Caco-2 (cell line): ENCODE measurements at regions of chr2 and their contacts with region 1.

Region 1: DNA sequence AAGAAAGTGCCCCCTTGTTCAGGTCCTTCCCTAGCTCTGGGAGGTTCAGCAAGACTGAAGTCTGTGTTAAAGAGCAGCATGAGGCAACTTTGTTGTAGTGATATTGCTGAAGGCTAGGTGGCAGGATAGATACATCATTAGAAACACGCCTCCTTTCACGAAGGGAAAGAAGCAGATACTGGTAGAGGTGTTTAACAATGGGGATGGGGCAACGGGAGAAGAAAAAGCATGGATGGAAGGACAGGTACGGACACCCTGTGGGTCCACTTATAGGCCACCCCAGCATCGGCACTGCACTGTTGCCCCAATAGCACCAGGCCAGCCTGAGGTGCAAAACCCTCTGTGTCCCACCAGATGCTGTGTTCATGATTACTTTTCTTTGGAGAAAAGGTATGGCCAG is 3.5 kb upstream of the IGFBP5 start:
- DNase-seq: peak in 1 of 2 experiments; percentile 55
- H3K4me3 ChIP-seq: no peak overlapping the region
- H3K4me3 Mint-ChIP-seq: no peak overlapping the region
- H3K27ac Mint-ChIP-seq: no peak overlapping the region
- H3K4me1 ChIP-seq: peaks cover 6% of the 10 kb centered on the region; the same call in 1 of the 2 replicates
- H3K4me1 Mint-ChIP-seq: peaks cover 6% of the 10 kb centered on the region
- H3K27me3 ChIP-seq: no peaks in the 10 kb centered on the region; the same call in 1 of the 2 replicates
- H3K27me3 Mint-ChIP-seq: peaks cover 16% of the 10 kb centered on the region
- CTCF ChIP-seq: peak; percentile 69 to 80

Region 2: GRCh38 chr2:216632952-216633615 is 65.8 kb before region 1 on chr2 and contains the start of gene IGFBP2:
- CTCF ChIA-PET with region 1: no interaction called
- POLR2A ChIA-PET with region 1: no interaction called
- intact Hi-C with region 1: no loop called
- DNase-seq: peak; percentile 15 to 42
- H3K4me3 ChIP-seq: peak within 1 kb of the TSS; percentile 48
- H3K4me3 Mint-ChIP-seq: peak within 1 kb of the TSS; percentile 79
- H3K27ac Mint-ChIP-seq: no peak within 1 kb of the TSS
- H3K4me1 ChIP-seq: peaks cover 28% of the 10 kb centered on the region
- H3K4me1 Mint-ChIP-seq: peaks cover 21% of the 10 kb centered on the region
- H3K27me3 ChIP-seq: peaks cover 3% of the 10 kb centered on the region; the same call in 1 of the 2 replicates
- H3K27me3 Mint-ChIP-seq: peaks cover 48% of the 10 kb centered on the region
- CTCF ChIP-seq: no peak
- total RNA-seq, gene IGFBP2: 6.6 and 6.7 TPM in 2 replicates

Region 3: GRCh38 chr2:216777650-216778273 is 78.9 kb after region 1 on chr2:
- CTCF ChIA-PET with region 1: interaction called, 3 read pairs
- POLR2A ChIA-PET with region 1: no interaction called
- intact Hi-C with region 1: loop called (anchors 2 kb)
- DNase-seq: peak; percentile 74 to 77
- H3K4me3 ChIP-seq: no peak overlapping the region
- H3K4me3 Mint-ChIP-seq: no peak overlapping the region
- H3K27ac Mint-ChIP-seq: no peak overlapping the region
- H3K4me1 ChIP-seq: 0 out of 2 replicates have a peak, but pooled peaks cover 2% of the 10 kb centered on the region
- H3K4me1 Mint-ChIP-seq: no peaks in the 10 kb centered on the region
- H3K27me3 ChIP-seq: no peaks in the 10 kb centered on the region
- H3K27me3 Mint-ChIP-seq: peaks cover 7% of the 10 kb centered on the region
- CTCF ChIP-seq: peak; percentile 90 to 93

Region 4: DNA sequence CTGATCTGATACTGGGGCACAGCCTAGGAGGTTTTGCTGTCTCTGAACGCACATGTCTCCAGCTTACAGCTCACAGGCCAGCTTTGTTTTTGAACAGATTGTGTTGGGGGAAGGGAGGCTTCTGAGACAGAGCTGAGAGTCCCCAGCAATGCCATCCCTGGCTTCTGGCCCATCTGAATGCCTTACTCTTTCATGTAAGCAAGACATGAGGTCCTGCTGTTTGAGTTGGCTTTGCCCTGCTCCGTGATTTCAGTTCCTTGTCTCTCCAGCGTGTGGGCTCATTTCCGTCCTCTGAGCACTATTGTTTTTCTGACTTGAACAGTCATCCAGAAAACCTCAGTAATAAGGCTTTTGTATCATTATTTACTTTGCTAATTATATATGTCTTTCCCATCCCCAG is 355.9 kb after region 1 on chr2:
- CTCF ChIA-PET with region 1: interaction called, 3 read pairs
- POLR2A ChIA-PET with region 1: no interaction called
- intact Hi-C with region 1: loop called (anchors 10 kb)
- DNase-seq: no peak
- H3K4me3 ChIP-seq: no peak overlapping the region
- H3K4me3 Mint-ChIP-seq: no peak overlapping the region
- H3K27ac Mint-ChIP-seq: peak overlapping the region; percentile 8
- H3K4me1 ChIP-seq: no peaks in the 10 kb centered on the region
- H3K4me1 Mint-ChIP-seq: peaks cover 5% of the 10 kb centered on the region
- H3K27me3 ChIP-seq: no peaks in the 10 kb centered on the region
- H3K27me3 Mint-ChIP-seq: no peaks in the 10 kb centered on the region
- CTCF ChIP-seq: no peak

Region 5: GRCh38 chr2:217166241-217166850 is 467.5 kb after region 1 on chr2:
- CTCF ChIA-PET with region 1: interaction called, 5 read pairs
- POLR2A ChIA-PET with region 1: no interaction called
- intact Hi-C with region 1: loop called (anchors 2 kb)
- DNase-seq: peak in 1 of 2 experiments; percentile 35
- H3K4me3 ChIP-seq: no peak overlapping the region
- H3K4me3 Mint-ChIP-seq: no peak overlapping the region
- H3K27ac Mint-ChIP-seq: no peak overlapping the region
- H3K4me1 ChIP-seq: no peaks in the 10 kb centered on the region
- H3K4me1 Mint-ChIP-seq: no peaks in the 10 kb centered on the region
- H3K27me3 ChIP-seq: peaks cover 1% of the 10 kb centered on the region; the same call in 1 of the 2 replicates
- H3K27me3 Mint-ChIP-seq: peaks cover 8% of the 10 kb centered on the region
- CTCF ChIP-seq: peak; percentile 39 to 44

Region 6: DNA sequence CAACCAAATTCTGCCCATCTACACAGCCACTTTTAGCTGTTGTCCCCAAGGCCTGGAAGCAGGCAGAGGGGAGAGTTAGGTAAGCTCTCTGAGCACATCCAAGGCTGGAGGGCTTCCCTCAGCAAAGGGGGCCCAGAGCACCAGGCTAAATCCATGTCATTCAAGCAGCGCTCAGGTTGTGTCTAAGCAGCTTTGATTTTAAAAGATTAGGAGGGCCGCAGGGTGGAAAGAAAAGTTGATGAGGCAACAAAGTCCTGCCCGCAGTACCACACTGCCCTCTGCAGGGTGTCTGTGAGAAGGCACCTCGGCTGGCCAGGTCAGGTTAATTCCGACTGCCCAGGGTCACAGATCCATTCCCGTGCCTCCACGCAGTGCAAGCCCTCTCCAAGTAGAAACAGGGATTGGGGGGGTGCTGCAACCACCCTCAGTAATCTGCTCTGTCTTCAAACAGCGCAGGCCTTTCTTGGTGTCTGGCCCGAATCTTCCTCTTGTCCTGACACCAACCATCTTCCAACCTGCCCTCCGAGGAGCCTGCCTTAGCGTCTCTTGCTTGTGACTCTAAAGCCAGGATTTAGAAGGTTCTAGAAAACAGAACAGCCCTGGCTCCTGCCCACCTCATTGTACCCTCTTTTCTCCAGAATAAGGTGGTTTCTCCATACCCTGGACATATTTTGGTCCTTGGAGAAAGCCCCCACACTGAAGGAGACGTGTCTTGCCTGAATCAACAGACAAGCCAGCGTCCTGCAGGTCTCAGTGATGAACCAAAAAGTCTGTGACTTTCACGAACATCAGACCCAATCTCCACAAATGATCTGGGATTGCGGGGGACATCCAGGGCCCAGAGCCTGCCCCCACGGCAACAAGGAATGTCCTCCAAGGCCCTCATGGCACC is 1014.7 kb after region 1 on chr2:
- CTCF ChIA-PET with region 1: interaction called, 3 read pairs
- POLR2A ChIA-PET with region 1: no interaction called
- intact Hi-C with region 1: loop called (anchors 1 kb)
- DNase-seq: peak; percentile 72 to 89
- H3K4me3 ChIP-seq: no peak overlapping the region
- H3K4me3 Mint-ChIP-seq: no peak overlapping the region
- H3K27ac Mint-ChIP-seq: no peak overlapping the region
- H3K4me1 ChIP-seq: no peaks in the 10 kb centered on the region
- H3K4me1 Mint-ChIP-seq: no peaks in the 10 kb centered on the region
- H3K27me3 ChIP-seq: no peaks in the 10 kb centered on the region; the same call in 1 of the 2 replicates
- H3K27me3 Mint-ChIP-seq: peaks cover 4% of the 10 kb centered on the region
- CTCF ChIP-seq: peak; percentile 97 to 98